ENCODE measurements at regions of chr6 and their contacts with region 1.

Region 1: GRCh38 chr6:53348371-53349208 is at the start of gene ELOVL5:
- DNase-seq: peak; percentile 87 to 99 (median 96)
- H3K4me3 ChIP-seq: peak within 1 kb of the TSS; percentile 90
- H3K4me3 Mint-ChIP-seq: peak within 1 kb of the TSS; percentile 96 to 100 (median 98)
- H3K27ac ChIP-seq: peak within 1 kb of the TSS; percentile 91
- H3K27ac Mint-ChIP-seq: peak within 1 kb of the TSS; percentile 94 to 99 (median 98)
- H3K4me1 ChIP-seq: peaks cover 42% of the 10 kb centered on the region
- H3K4me1 Mint-ChIP-seq: peaks cover 41 to 48% (median 46%) of the 10 kb centered on the region in 3 donors
- H3K27me3 ChIP-seq: no peaks in the 10 kb centered on the region
- H3K27me3 Mint-ChIP-seq: peaks cover 0 to 7% of the 10 kb centered on the region in 2 donors
- total RNA-seq, gene ELOVL5: 117 to 124 TPM

Region 2: GRCh38 chr6:53294095-53294494 is 54.5 kb before region 1 on chr6:
- CTCF ChIA-PET with region 1: interaction called, 14 read pairs
- POLR2A ChIA-PET with region 1: interaction called, 9 read pairs
- DNase-seq: peak in 2 of 5 donors; percentile 46 to 51
- H3K4me3 ChIP-seq: no peak overlapping the region
- H3K4me3 Mint-ChIP-seq: no peak overlapping the region
- H3K27ac ChIP-seq: no peak overlapping the region
- H3K27ac Mint-ChIP-seq: peak overlapping the region; percentile 0 to 95 (median 60)
- H3K4me1 ChIP-seq: peaks cover 66% of the 10 kb centered on the region
- H3K4me1 Mint-ChIP-seq: peaks cover 83 to 98% (median 96%) of the 10 kb centered on the region in 3 donors
- H3K27me3 ChIP-seq: no peaks in the 10 kb centered on the region
- H3K27me3 Mint-ChIP-seq: no peaks in the 10 kb centered on the region

Region 3: GRCh38 chr6:53300656-53301551 is 47.7 kb before region 1 on chr6:
- CTCF ChIA-PET with region 1: interaction called, 14 read pairs
- POLR2A ChIA-PET with region 1: interaction called, 16 read pairs
- DNase-seq: peak in 4 of 5 donors; percentile 20 to 63 (median 50)
- H3K4me3 ChIP-seq: no peak overlapping the region
- H3K4me3 Mint-ChIP-seq: peak overlapping the region; percentile 3 to 83 (median 65)
- H3K27ac ChIP-seq: peak overlapping the region; percentile 5
- H3K27ac Mint-ChIP-seq: peak overlapping the region; percentile 77 to 96 (median 92)
- H3K4me1 ChIP-seq: peaks cover 64% of the 10 kb centered on the region
- H3K4me1 Mint-ChIP-seq: peaks cover 76 to 88% (median 87%) of the 10 kb centered on the region in 3 donors
- H3K27me3 ChIP-seq: no peaks in the 10 kb centered on the region
- H3K27me3 Mint-ChIP-seq: no peaks in the 10 kb centered on the region

Region 4: DNA sequence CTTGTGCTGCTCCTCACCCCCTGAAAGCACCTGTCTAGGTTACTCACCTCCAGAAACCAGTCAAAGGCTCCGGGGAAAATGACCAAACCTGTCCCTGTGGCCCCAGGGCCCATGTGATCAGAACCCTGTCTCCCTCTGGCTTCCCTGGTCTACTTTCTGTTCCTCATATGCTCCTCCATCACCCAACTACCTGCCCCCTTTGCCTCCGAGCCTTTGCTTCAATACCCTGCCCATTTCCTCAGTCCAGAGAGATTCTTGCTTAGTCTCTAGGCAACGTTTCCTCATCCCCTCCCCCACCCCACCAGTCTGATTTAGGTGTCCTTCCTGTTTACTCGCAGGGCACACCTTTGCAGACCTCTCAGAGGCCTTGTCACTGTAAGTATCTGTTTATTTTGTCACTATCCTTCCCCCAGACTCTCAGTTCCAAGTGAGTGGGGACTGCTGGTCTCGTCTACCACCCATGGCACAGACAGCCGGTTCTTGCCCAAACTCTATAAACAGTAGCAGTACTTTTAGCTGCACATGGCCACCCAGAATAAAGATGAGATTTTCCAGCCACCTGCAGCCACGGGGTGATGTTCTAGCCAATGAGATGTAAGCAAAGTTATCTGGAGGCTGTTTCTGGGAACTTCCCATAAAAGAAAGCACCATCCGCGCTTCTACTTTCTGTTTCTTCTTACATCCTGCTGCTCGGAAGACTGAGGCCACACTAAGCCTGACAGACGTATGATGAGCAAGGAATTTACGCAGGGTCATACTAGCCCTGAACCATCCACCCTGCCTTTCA is 13.2 kb before region 1 on chr6:
- CTCF ChIA-PET with region 1: interaction called, 36 read pairs
- POLR2A ChIA-PET with region 1: interaction called, 51 read pairs
- DNase-seq: peak; percentile 53 to 87 (median 74)
- H3K4me3 ChIP-seq: peak overlapping the region; percentile 59
- H3K4me3 Mint-ChIP-seq: peak overlapping the region; percentile 83 to 95 (median 89)
- H3K27ac ChIP-seq: peak overlapping the region; percentile 84
- H3K27ac Mint-ChIP-seq: peak overlapping the region; percentile 96 to 100 (median 99)
- H3K4me1 ChIP-seq: peaks cover 87% of the 10 kb centered on the region
- H3K4me1 Mint-ChIP-seq: peaks cover 90 to 98% (median 96%) of the 10 kb centered on the region in 3 donors
- H3K27me3 ChIP-seq: no peaks in the 10 kb centered on the region
- H3K27me3 Mint-ChIP-seq: no peaks in the 10 kb centered on the region

Region 5: DNA sequence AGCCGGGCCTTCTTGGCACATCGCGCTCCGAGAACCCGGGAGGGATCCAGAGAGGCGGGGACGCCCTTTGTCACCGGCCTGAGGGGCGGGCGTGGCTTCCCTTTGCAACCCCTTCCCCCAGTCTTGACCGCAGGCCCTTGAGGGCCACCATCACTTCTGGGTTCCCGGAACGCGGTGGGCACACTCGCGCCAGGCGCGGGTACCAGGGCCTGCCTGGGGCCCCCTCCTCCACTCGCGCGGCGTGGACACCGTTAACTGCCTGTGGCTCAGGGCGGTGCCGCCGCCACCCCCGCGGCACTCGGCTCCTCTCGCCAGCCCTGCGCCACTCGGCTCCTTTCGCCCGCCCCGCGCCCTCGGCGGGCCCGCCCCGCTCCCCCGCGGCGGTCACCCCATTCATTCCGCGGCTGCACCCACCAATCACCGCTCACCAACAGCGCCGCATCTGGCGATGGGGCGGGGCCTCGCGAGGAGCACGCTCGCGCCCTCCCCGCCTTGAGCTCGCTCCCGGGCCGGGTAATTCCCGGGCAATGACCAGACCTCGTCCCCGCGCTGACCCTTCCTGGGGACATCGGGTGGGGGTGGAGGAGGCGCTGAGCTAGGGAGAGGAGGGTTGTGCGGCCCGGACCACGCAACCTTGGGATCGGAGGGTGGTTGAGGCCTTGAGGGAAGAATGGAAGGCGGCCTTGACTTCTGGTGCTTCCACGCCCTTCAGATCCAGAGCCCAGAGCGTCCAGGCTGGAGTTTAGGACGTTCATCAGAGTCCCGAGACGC is 10.7 kb after region 1 on chr6:
- CTCF ChIA-PET with region 1: interaction called, 32 read pairs
- POLR2A ChIA-PET with region 1: interaction called, 68 read pairs
- DNase-seq: peak; percentile 83 to 93 (median 88)
- H3K4me3 ChIP-seq: peak overlapping the region; percentile 75
- H3K4me3 Mint-ChIP-seq: peak overlapping the region; percentile 80 to 92 (median 90)
- H3K27ac ChIP-seq: peak overlapping the region; percentile 94
- H3K27ac Mint-ChIP-seq: peak overlapping the region; percentile 94 to 99 (median 98)
- H3K4me1 ChIP-seq: peaks cover 41% of the 10 kb centered on the region
- H3K4me1 Mint-ChIP-seq: peaks cover 40 to 51% (median 48%) of the 10 kb centered on the region in 3 donors
- H3K27me3 ChIP-seq: no peaks in the 10 kb centered on the region
- H3K27me3 Mint-ChIP-seq: peaks cover 0 to 1% of the 10 kb centered on the region in 2 donors

Region 6: GRCh38 chr6:53410508-53411258 is 62.1 kb after region 1 on chr6:
- CTCF ChIA-PET with region 1: interaction called, 11 read pairs
- POLR2A ChIA-PET with region 1: no interaction called
- DNase-seq: peak; percentile 24 to 74 (median 49)
- H3K4me3 ChIP-seq: no peak overlapping the region
- H3K4me3 Mint-ChIP-seq: no peak overlapping the region
- H3K27ac ChIP-seq: no peak overlapping the region
- H3K27ac Mint-ChIP-seq: no peak overlapping the region
- H3K4me1 ChIP-seq: no peaks in the 10 kb centered on the region
- H3K4me1 Mint-ChIP-seq: peaks cover 0 to 5% (median 3%) of the 10 kb centered on the region in 3 donors
- H3K27me3 ChIP-seq: no peaks in the 10 kb centered on the region
- H3K27me3 Mint-ChIP-seq: no peaks in the 10 kb centered on the region

Region 7: GRCh38 chr6:53439556-53439955 is 91.0 kb after region 1 on chr6:
- CTCF ChIA-PET with region 1: no interaction called
- POLR2A ChIA-PET with region 1: no interaction called
- DNase-seq: no peak
- H3K4me3 ChIP-seq: no peak overlapping the region
- H3K4me3 Mint-ChIP-seq: no peak overlapping the region
- H3K27ac ChIP-seq: no peak overlapping the region
- H3K27ac Mint-ChIP-seq: no peak overlapping the region
- H3K4me1 ChIP-seq: no peaks in the 10 kb centered on the region
- H3K4me1 Mint-ChIP-seq: peaks cover 0 to 4% (median 2%) of the 10 kb centered on the region in 3 donors
- H3K27me3 ChIP-seq: no peaks in the 10 kb centered on the region
- H3K27me3 Mint-ChIP-seq: peaks cover 7 to 22% of the 10 kb centered on the region in 2 donors

Region 8: GRCh38 chr6:53524455-53524815 is 175.8 kb after region 1 on chr6:
- CTCF ChIA-PET with region 1: no interaction called
- POLR2A ChIA-PET with region 1: no interaction called
- DNase-seq: no peak
- H3K4me3 ChIP-seq: no peak overlapping the region
- H3K4me3 Mint-ChIP-seq: no peak overlapping the region
- H3K27ac ChIP-seq: no peak overlapping the region
- H3K27ac Mint-ChIP-seq: peak overlapping the region in 2 of 8 donors; percentile 21 to 32
- H3K4me1 ChIP-seq: no peaks in the 10 kb centered on the region
- H3K4me1 Mint-ChIP-seq: peaks cover 16 to 48% (median 46%) of the 10 kb centered on the region in 3 donors
- H3K27me3 ChIP-seq: no peaks in the 10 kb centered on the region
- H3K27me3 Mint-ChIP-seq: no peaks in the 10 kb centered on the region

Measured in CD8-positive, alpha-beta memory T cell (primary cell).